Naive thymus-derived CD4-positive, alpha-beta T cell (primary cell): ENCODE measurements at regions of chr14 and their contacts with region 1.

Region 1: GRCh38 chr14:65847075-65847847 is 434.7 kb downstream of the FUT8 start:
- DNase-seq: peak in 8 of 9 donors; percentile 67 to 94 (median 90)
- ATAC-seq: peak; percentile 90
- H3K4me3 ChIP-seq: peak overlapping the region; percentile 38
- H3K4me3 Mint-ChIP-seq: peak overlapping the region; percentile 70 to 88 (median 80)
- H3K27ac ChIP-seq: peak overlapping the region; percentile 74
- H3K27ac Mint-ChIP-seq: peak overlapping the region; percentile 91 to 99 (median 94)
- H3K4me1 ChIP-seq: peaks cover 63 to 85% of the 10 kb centered on the region in 2 donors
- H3K4me1 Mint-ChIP-seq: peaks cover 39 to 92% (median 88%) of the 10 kb centered on the region in 7 donors
- H3K27me3 ChIP-seq: no peaks in the 10 kb centered on the region
- H3K27me3 Mint-ChIP-seq: no peaks in the 10 kb centered on the region

Region 2: DNA sequence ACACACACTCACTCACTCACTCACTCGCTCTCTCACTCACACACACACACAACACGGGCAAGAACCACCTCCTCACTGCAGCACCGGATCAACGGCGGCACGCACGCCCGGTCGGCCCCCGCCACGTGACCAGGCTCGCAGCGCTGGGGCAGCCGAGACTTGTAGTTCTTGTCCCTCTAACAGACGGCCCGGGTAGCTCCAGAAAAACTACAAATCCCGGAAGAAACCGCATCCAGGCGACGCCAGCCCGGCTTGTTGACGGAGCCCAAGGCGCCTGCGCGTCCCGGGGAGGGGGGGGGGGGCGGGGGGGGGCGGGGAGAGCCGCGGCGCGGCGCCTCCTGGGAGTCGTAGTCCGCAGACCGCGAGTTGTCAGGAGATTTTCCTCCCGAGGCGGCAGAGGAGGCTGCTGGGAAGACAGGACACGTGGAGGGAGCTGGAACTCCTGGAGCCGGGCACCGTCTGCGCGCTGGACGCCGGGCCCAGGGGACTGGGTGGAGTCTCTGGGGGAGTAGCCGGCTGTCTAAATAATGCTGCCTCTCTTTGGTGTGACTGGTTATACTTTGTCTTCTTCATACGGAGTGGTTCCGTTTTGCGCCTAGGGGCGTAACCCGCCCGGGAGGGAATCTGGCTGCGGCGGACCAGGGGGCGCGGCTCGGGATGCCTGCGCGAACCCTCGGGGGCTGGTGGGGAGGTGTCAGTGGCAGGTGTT is 744.7 kb before region 1 on chr14 and contains the start of gene MAX:
- CTCF ChIA-PET with region 1: no interaction called
- POLR2A ChIA-PET with region 1: interaction called, 3 read pairs
- intact Hi-C with region 1: loop called (anchors 1 to 2 kb)
- DNase-seq: peak; percentile 88 to 100 (median 99)
- ATAC-seq: peak; percentile 95
- H3K4me3 ChIP-seq: peak within 1 kb of the TSS; percentile 96
- H3K4me3 Mint-ChIP-seq: peak within 1 kb of the TSS; percentile 87 to 97 (median 91)
- H3K27ac ChIP-seq: peak within 1 kb of the TSS; percentile 100
- H3K27ac Mint-ChIP-seq: peak within 1 kb of the TSS; percentile 91 to 99 (median 94)
- H3K4me1 ChIP-seq: peaks cover 17 to 34% of the 10 kb centered on the region in 2 donors
- H3K4me1 Mint-ChIP-seq: peaks cover 28 to 43% (median 42%) of the 10 kb centered on the region in 7 donors
- H3K27me3 ChIP-seq: no peaks in the 10 kb centered on the region
- H3K27me3 Mint-ChIP-seq: peaks cover 0 to 12% (median 0%) of the 10 kb centered on the region in 5 donors
- total RNA-seq, gene MAX: 164 to 236 (median 202) TPM

Region 3: GRCh38 chr14:65791191-65791981 is 55.9 kb before region 1 on chr14:
- CTCF ChIA-PET with region 1: no interaction called
- POLR2A ChIA-PET with region 1: no interaction called
- intact Hi-C with region 1: no loop called
- DNase-seq: peak in 4 of 9 donors; percentile 1 to 9 (median 5)
- ATAC-seq: peak; percentile 79
- H3K4me3 ChIP-seq: no peak overlapping the region
- H3K4me3 Mint-ChIP-seq: no peak overlapping the region
- H3K27ac ChIP-seq: no peak overlapping the region
- H3K27ac Mint-ChIP-seq: no peak overlapping the region
- H3K4me1 ChIP-seq: no peaks in the 10 kb centered on the region
- H3K4me1 Mint-ChIP-seq: no peaks in the 10 kb centered on the region
- H3K27me3 ChIP-seq: no peaks in the 10 kb centered on the region
- H3K27me3 Mint-ChIP-seq: peaks cover 0 to 21% (median 5%) of the 10 kb centered on the region in 5 donors

Region 4: GRCh38 chr14:65824285-65824977 is 22.8 kb before region 1 on chr14:
- CTCF ChIA-PET with region 1: interaction called, 18 read pairs
- POLR2A ChIA-PET with region 1: interaction called, 18 read pairs
- intact Hi-C with region 1: loop called (anchors 1 kb)
- DNase-seq: peak in 8 of 9 donors; percentile 38 to 71 (median 60)
- ATAC-seq: peak; percentile 93
- H3K4me3 ChIP-seq: no peak overlapping the region
- H3K4me3 Mint-ChIP-seq: peak overlapping the region in 1 of 10 donors; percentile 39
- H3K27ac ChIP-seq: no peak overlapping the region
- H3K27ac Mint-ChIP-seq: peak overlapping the region in 3 of 9 donors; percentile 0 to 66 (median 66)
- H3K4me1 ChIP-seq: peaks cover 6 to 8% of the 10 kb centered on the region in 2 donors
- H3K4me1 Mint-ChIP-seq: peaks cover 3 to 33% (median 14%) of the 10 kb centered on the region in 7 donors
- H3K27me3 ChIP-seq: no peaks in the 10 kb centered on the region
- H3K27me3 Mint-ChIP-seq: peaks cover 0 to 7% (median 0%) of the 10 kb centered on the region in 5 donors

Region 5: GRCh38 chr14:65866886-65867285 is 19.6 kb after region 1 on chr14:
- CTCF ChIA-PET with region 1: interaction called, 9 read pairs
- POLR2A ChIA-PET with region 1: interaction called, 29 read pairs
- intact Hi-C with region 1: no loop called
- DNase-seq: no peak
- ATAC-seq: no peak
- H3K4me3 ChIP-seq: no peak overlapping the region
- H3K4me3 Mint-ChIP-seq: no peak overlapping the region
- H3K27ac ChIP-seq: no peak overlapping the region
- H3K27ac Mint-ChIP-seq: no peak overlapping the region
- H3K4me1 ChIP-seq: peaks cover 5 to 41% of the 10 kb centered on the region in 2 donors
- H3K4me1 Mint-ChIP-seq: peaks cover 25 to 50% (median 38%) of the 10 kb centered on the region in 7 donors
- H3K27me3 ChIP-seq: no peaks in the 10 kb centered on the region
- H3K27me3 Mint-ChIP-seq: no peaks in the 10 kb centered on the region

Region 6: GRCh38 chr14:65958664-65959562 is 111.7 kb after region 1 on chr14:
- CTCF ChIA-PET with region 1: interaction called, 40 read pairs
- POLR2A ChIA-PET with region 1: interaction called, 7 read pairs
- intact Hi-C with region 1: loop called (anchors 1 kb)
- DNase-seq: peak in 6 of 9 donors; percentile 15 to 52 (median 42)
- ATAC-seq: peak; percentile 66
- H3K4me3 ChIP-seq: no peak overlapping the region
- H3K4me3 Mint-ChIP-seq: peak overlapping the region in 1 of 10 donors; percentile 50
- H3K27ac ChIP-seq: no peak overlapping the region
- H3K27ac Mint-ChIP-seq: peak overlapping the region in 6 of 9 donors; percentile 3 to 80 (median 39)
- H3K4me1 ChIP-seq: peaks cover 12 to 14% of the 10 kb centered on the region in 2 donors
- H3K4me1 Mint-ChIP-seq: peaks cover 0 to 47% (median 20%) of the 10 kb centered on the region in 7 donors
- H3K27me3 ChIP-seq: no peaks in the 10 kb centered on the region
- H3K27me3 Mint-ChIP-seq: peaks cover 0 to 17% (median 0%) of the 10 kb centered on the region in 5 donors